KBM-7 (cell line): ENCODE measurements at regions of chr6 and their contacts with region 1.

Region 1: DNA sequence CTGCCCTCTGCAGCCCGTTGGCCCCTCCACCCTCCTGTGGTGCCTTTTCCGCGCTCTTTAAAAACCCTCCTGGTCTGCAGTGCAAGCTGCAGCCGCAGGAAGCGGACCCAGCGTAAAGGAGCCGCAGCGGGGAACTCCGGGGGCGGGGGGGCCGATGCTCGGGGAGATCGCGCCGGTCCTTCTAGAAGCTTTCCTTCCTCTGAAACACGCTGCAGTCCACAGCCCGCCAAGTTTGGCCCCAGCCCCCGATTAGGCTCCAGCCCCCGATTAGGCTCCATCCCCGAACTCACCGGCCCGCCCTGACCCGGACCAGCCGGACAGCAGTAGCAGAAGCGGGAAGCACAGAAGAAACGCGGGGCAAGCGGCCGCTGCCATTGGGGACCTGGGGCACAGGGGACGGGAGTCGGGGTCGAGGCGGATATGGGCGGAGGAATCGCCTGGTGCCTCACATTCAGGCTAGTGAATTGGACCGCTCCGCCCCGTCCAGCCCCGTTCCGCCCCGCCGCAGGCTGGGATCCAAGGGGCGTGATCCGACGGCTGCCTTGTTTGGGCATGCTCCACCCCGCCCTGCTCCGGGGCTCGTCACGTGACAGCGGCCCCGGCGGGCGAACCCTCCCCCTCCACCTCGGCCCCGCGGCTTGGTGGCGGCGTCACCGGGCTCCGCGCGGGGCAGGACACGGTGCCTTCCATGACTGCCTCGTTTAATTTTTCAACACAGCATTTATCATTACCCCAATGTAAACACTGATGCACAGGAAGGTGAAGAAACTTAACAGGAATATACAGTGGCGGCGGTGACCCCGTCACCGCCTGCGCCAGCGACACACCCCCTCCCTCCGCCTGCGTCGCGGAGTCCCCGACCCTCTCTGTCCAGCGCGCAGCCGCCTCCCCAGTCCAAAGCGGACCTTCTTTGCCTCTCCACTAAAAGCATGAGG is 20.3 kb downstream of the RAET1L start:
- DNase-seq: peak; percentile 95

Region 2: DNA sequence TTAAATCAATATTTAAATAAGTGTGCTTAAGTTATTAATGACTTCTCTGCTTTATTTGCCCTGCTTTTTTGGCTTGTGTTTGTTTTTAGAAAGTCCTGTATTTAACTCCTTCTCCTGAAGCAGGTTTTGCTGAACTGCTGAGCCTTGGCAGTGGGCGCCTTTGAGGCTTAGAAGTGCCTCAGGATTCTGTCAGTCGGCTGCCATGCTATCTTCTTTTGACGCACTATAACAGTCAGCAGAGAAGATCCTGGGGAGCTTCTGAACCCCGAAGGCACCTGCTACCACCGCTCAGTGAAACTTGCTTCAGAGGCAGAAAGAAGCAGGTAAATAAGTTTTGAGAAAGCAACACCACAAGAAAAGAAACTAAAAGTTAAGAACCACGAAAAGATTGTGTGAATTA is 233.1 kb before region 1 on chr6:
- in situ Hi-C with region 1: no loop called
- DNase-seq: no peak

Region 3: DNA sequence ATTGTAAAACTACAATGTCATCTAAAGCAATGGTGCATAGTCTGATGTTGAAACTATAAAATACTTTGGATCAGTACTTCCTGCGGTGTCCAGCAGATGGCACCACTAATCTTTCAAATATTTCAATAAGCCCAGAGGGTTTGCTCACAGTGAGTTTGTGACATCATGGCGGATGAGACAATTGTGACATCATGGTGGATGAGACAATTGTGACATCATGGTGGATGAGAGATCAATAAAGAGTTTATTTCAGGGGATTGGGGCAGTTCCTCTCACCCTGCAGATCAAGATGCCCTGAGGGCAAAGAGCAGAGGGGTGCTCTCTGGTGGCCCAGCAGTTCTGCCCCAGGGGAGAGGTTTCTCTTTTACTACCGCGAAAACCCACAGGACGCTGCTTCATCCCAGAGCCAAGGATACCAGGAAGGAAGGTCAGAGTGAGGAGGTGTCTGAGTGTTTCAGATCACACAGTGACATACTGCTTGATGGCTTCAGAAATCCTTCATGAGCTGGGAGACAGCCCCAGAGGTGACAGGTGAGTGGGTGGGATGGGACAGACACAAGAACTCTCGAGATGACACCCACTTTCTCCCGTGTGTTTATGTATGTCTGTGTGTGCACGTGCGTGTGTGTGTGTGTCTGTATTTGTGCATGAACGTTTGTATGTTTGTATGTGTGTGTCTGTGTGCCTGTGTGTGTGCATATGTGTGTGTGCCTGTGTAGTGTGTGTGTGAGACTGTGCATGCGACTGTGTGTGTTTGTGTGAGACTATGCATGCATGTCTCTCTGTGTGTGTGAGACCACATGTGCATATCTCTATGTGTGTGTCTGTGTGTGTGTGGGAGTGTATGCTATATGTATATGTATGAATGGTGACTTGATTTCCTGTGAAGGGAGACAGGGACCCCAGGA is 70.5 kb before region 1 on chr6:
- in situ Hi-C with region 1: loop called (anchors 10 kb)
- DNase-seq: peak; percentile 82

Region 4: DNA sequence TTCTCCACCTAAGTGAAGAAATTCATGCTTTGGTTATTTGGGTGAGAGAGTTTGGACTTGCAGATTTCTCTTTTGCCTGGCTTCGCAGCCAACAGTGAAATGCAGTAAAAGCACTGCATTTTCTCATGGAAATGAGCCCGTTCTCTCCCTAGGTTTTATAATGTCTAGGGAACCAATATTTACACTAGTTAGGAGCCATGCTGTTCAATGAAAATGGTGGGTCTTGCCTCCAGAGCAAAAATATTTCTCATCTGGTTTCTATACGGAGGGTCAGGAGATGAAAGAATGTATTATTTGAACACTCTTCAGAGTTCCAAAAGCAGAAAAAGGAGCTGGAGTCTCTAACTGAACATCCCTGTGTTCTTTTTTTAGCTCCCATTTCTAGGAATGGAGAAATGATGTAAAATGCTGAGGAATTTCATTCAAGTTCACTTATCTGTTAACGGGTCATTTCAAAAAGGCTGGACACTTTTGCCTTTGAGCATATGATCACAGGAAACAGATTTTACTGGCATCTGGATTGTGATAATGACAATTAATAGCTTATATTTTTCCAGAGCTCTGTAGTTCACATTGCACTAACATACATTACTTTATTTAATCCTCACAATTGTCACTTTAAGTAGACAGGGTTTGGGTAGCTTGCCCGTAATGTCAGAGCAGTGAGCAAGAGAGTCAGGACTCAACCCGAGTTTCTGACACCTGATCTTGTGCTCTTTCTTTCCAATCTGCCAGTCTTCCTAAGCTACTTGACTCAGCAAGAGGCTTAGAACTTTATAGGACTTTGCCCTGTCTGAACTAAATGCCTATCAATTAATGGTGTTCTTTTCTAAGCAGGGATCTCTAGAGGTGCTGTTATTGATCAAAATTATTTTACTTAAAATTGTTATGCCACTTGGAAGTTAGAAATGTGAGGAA is 215.8 kb after region 1 on chr6:
- in situ Hi-C with region 1: no loop called
- DNase-seq: no peak